CD4-positive, alpha-beta memory T cell (primary cell): ENCODE measurements at regions of chr12 and their contacts with region 1.

Region 1: DNA sequence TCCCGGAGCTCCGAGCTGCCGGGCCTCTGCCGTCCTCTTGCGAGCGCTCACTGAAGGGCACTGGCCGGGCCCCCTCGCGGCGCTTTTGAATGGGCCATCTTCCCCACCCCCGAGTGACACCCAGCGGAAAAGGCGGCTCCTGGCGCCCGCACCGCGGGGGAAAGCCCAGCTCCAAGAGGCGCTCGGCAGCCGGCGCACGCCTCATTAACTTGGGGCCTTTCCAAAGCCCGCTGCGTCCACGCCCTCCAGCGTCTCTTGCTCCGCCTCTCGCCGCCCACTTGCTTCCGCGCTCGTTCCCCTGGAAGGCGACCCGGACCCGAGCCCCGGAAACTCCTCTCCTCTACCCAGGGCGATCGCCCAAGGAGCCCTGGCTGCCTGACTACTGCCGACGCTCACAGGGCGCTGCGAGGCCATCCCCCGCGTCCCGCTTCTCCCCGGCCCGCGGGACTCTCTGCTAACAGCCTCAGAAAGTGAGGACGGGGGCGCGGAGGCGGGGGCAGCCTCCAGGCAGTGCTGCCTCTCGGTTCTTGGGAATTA is at the start of gene PHLDA1:
- DNase-seq: peak; percentile 88 to 95 (median 91)
- H3K4me3 ChIP-seq: peak within 1 kb of the TSS; percentile 69 to 84
- H3K4me3 Mint-ChIP-seq: peak within 1 kb of the TSS; percentile 90 to 98 (median 94)
- H3K27ac ChIP-seq: peak within 1 kb of the TSS; percentile 89
- H3K27ac Mint-ChIP-seq: peak within 1 kb of the TSS; percentile 94 to 98 (median 98)
- H3K4me1 ChIP-seq: peaks cover 24% of the 10 kb centered on the region
- H3K4me1 Mint-ChIP-seq: peaks cover 18 to 45% (median 31%) of the 10 kb centered on the region in 4 donors
- H3K27me3 ChIP-seq: no peaks in the 10 kb centered on the region
- H3K27me3 Mint-ChIP-seq: no peaks in the 10 kb centered on the region
- total RNA-seq, gene PHLDA1: 8.2 to 8.5 TPM

Region 2: GRCh38 chr12:75099210-75099609 is 932.4 kb before region 1 on chr12:
- CTCF ChIA-PET with region 1: no interaction called
- POLR2A ChIA-PET with region 1: no interaction called
- intact Hi-C with region 1: no loop called
- DNase-seq: no peak
- H3K4me3 ChIP-seq: no peak overlapping the region
- H3K4me3 Mint-ChIP-seq: no peak overlapping the region
- H3K27ac ChIP-seq: no peak overlapping the region
- H3K27ac Mint-ChIP-seq: no peak overlapping the region
- H3K4me1 ChIP-seq: no peaks in the 10 kb centered on the region
- H3K4me1 Mint-ChIP-seq: no peaks in the 10 kb centered on the region
- H3K27me3 ChIP-seq: no peaks in the 10 kb centered on the region
- H3K27me3 Mint-ChIP-seq: no peaks in the 10 kb centered on the region

Region 3: GRCh38 chr12:75480469-75480949 is 551.1 kb before region 1 on chr12 and contains the start of gene GLIPR1:
- CTCF ChIA-PET with region 1: interaction called, 13 read pairs
- POLR2A ChIA-PET with region 1: interaction called, 29 read pairs
- intact Hi-C with region 1: loop called (anchors 2 kb)
- DNase-seq: peak; percentile 78 to 85 (median 83)
- H3K4me3 ChIP-seq: peak within 1 kb of the TSS; percentile 74 to 84
- H3K4me3 Mint-ChIP-seq: peak within 1 kb of the TSS; percentile 92 to 99 (median 97)
- H3K27ac ChIP-seq: peak within 1 kb of the TSS; percentile 72
- H3K27ac Mint-ChIP-seq: peak within 1 kb of the TSS; percentile 98 to 100 (median 99)
- H3K4me1 ChIP-seq: peaks cover 77% of the 10 kb centered on the region
- H3K4me1 Mint-ChIP-seq: peaks cover 60 to 85% (median 70%) of the 10 kb centered on the region in 4 donors
- H3K27me3 ChIP-seq: no peaks in the 10 kb centered on the region
- H3K27me3 Mint-ChIP-seq: peaks cover 0 to 2% of the 10 kb centered on the region in 2 donors
- total RNA-seq, gene GLIPR1: 96.1 to 99.8 TPM

Region 4: DNA sequence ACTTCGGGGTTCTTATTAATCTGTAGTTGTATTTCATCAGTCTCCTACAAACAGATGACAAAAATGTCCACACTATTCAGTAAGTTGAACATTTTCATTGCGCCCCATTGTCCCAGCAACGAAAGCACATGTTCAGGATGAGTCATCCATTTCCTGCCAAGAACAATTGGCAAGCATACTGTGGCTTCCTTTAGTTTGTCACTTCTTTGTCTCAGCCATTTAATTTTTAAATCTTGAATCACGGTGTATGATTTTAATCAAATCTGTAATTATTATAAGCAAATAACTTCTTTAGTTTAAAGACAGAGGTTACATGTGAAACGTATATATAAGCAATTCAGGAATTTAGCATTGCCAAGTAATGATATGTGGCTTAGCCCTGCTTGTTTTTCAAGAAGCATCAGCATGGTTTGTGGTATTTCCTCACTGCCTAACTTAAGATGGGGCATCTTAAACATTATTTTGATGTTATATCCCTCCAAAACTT is 308.8 kb before region 1 on chr12:
- CTCF ChIA-PET with region 1: no interaction called
- POLR2A ChIA-PET with region 1: no interaction called
- intact Hi-C with region 1: loop called (anchors 2 kb)
- DNase-seq: peak; percentile 29 to 62 (median 36)
- H3K4me3 ChIP-seq: no peak overlapping the region
- H3K4me3 Mint-ChIP-seq: peak overlapping the region in 4 of 8 donors; percentile 1 to 75 (median 57)
- H3K27ac ChIP-seq: no peak overlapping the region
- H3K27ac Mint-ChIP-seq: peak overlapping the region; percentile 27 to 89 (median 76)
- H3K4me1 ChIP-seq: peaks cover 18% of the 10 kb centered on the region
- H3K4me1 Mint-ChIP-seq: peaks cover 14 to 32% (median 20%) of the 10 kb centered on the region in 4 donors
- H3K27me3 ChIP-seq: no peaks in the 10 kb centered on the region
- H3K27me3 Mint-ChIP-seq: no peaks in the 10 kb centered on the region

Region 5: DNA sequence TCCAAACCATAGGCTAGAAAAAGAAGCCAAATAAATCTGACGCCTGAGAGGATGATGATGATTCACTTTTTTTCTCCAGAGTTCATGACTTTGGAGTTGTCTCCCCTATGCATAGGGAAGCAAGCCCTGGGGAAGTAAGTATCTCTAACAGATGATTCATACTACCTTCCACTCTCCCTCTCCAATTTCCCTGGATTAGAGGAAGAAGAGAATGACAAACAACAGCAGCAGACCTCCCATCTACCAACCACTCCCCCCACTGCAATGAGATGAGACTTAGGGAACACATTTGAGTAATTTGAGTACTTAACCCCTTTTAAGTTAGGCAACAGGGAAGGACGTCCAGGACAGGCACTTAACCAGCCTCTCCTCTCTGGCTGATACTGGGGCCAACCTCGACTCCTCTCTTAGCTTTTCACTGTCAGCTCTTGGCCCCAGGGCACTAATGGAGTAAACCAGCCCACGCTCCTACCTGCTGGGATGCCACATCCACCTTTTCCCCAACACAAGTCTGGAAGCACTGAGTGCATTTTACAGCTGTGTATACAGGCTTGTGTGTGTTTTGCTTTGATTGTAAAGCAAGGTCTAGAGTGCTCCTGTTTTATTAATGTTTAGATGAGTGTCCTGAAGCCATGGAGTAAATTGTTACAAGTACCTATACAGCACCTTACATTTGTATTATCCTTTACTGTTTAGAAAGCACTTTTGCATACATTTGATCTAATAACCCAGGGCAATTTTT is 180.7 kb before region 1 on chr12:
- CTCF ChIA-PET with region 1: no interaction called
- POLR2A ChIA-PET with region 1: no interaction called
- intact Hi-C with region 1: no loop called
- DNase-seq: no peak
- H3K4me3 ChIP-seq: no peak overlapping the region
- H3K4me3 Mint-ChIP-seq: no peak overlapping the region
- H3K27ac ChIP-seq: no peak overlapping the region
- H3K27ac Mint-ChIP-seq: no peak overlapping the region
- H3K4me1 ChIP-seq: no peaks in the 10 kb centered on the region
- H3K4me1 Mint-ChIP-seq: peaks cover 0 to 7% (median 0%) of the 10 kb centered on the region in 4 donors
- H3K27me3 ChIP-seq: no peaks in the 10 kb centered on the region
- H3K27me3 Mint-ChIP-seq: peaks cover 0 to 12% of the 10 kb centered on the region in 2 donors

Region 6: GRCh38 chr12:75877763-75878621 is 153.6 kb before region 1 on chr12:
- CTCF ChIA-PET with region 1: no interaction called
- POLR2A ChIA-PET with region 1: no interaction called
- intact Hi-C with region 1: no loop called
- DNase-seq: no peak
- H3K4me3 ChIP-seq: no peak overlapping the region
- H3K4me3 Mint-ChIP-seq: no peak overlapping the region
- H3K27ac ChIP-seq: no peak overlapping the region
- H3K27ac Mint-ChIP-seq: no peak overlapping the region
- H3K4me1 ChIP-seq: no peaks in the 10 kb centered on the region
- H3K4me1 Mint-ChIP-seq: peaks cover 0 to 1% (median 0%) of the 10 kb centered on the region in 4 donors
- H3K27me3 ChIP-seq: no peaks in the 10 kb centered on the region
- H3K27me3 Mint-ChIP-seq: peaks cover 0 to 4% of the 10 kb centered on the region in 2 donors

Region 7: GRCh38 chr12:75944097-75944904 is 87.3 kb before region 1 on chr12:
- CTCF ChIA-PET with region 1: interaction called, 3 read pairs
- POLR2A ChIA-PET with region 1: interaction called, 28 read pairs
- intact Hi-C with region 1: no loop called
- DNase-seq: peak in 4 of 5 donors; percentile 15 to 41 (median 25)
- H3K4me3 ChIP-seq: no peak overlapping the region
- H3K4me3 Mint-ChIP-seq: peak overlapping the region in 7 of 8 donors; percentile 13 to 78 (median 41)
- H3K27ac ChIP-seq: peak overlapping the region; percentile 22
- H3K27ac Mint-ChIP-seq: peak overlapping the region; percentile 80 to 93 (median 87)
- H3K4me1 ChIP-seq: peaks cover 20% of the 10 kb centered on the region
- H3K4me1 Mint-ChIP-seq: peaks cover 14 to 21% (median 19%) of the 10 kb centered on the region in 4 donors
- H3K27me3 ChIP-seq: no peaks in the 10 kb centered on the region
- H3K27me3 Mint-ChIP-seq: no peaks in the 10 kb centered on the region

Region 8: DNA sequence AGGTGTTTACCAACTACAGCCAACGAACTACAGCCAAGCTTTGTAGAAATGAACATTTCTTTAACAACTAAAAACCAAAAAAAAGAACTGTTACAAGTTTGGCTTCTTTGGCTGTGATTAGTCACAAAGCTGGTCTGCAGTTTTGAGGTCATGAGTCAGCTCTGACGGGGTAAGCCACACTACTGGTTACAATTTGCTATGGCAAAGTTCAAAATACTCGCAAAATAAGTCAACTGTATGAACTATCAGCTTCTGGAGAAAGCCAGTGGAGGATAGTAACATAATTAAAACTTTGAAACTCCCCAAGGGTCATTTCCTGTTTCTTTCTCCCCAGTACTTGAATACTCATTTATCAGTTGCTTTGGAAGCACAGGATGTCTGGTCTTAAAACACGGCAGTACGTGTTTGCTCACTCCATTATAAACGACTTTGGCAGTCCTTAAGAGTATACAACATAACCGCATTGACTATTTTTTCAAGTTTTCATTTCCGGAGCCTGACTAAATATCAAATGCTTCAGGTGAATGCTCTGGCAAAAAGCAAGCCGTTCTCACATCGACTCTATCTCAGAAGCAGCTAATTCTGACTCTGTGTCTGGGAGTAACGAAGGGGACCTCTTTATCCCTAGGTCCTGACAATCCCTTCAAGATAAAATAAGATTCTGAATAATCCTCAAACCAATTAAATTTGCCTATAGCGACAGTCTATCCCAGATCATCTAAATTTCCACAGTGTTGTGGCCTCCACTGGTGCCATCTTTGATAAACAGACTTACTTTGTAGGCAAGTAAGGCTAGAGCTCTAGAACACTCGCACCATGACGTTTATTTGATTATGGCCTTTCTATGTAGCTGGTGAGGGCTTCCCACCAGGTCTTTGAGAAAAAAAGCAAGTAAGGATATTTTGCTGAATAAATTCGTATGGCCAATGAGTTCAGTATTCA is 10.6 kb before region 1 on chr12:
- CTCF ChIA-PET with region 1: interaction called, 42 read pairs
- POLR2A ChIA-PET with region 1: interaction called, 195 read pairs
- intact Hi-C with region 1: loop called (anchors 1 kb)
- DNase-seq: peak; percentile 79 to 90 (median 82)
- H3K4me3 ChIP-seq: no peak overlapping the region
- H3K4me3 Mint-ChIP-seq: peak overlapping the region; percentile 38 to 81 (median 56)
- H3K27ac ChIP-seq: peak overlapping the region; percentile 77
- H3K27ac Mint-ChIP-seq: peak overlapping the region; percentile 95 to 99 (median 97)
- H3K4me1 ChIP-seq: peaks cover 26% of the 10 kb centered on the region
- H3K4me1 Mint-ChIP-seq: peaks cover 18 to 45% (median 34%) of the 10 kb centered on the region in 4 donors
- H3K27me3 ChIP-seq: no peaks in the 10 kb centered on the region
- H3K27me3 Mint-ChIP-seq: no peaks in the 10 kb centered on the region